ENCODE measurements at regions of chr7 and their contacts with region 1.

Region 1: DNA sequence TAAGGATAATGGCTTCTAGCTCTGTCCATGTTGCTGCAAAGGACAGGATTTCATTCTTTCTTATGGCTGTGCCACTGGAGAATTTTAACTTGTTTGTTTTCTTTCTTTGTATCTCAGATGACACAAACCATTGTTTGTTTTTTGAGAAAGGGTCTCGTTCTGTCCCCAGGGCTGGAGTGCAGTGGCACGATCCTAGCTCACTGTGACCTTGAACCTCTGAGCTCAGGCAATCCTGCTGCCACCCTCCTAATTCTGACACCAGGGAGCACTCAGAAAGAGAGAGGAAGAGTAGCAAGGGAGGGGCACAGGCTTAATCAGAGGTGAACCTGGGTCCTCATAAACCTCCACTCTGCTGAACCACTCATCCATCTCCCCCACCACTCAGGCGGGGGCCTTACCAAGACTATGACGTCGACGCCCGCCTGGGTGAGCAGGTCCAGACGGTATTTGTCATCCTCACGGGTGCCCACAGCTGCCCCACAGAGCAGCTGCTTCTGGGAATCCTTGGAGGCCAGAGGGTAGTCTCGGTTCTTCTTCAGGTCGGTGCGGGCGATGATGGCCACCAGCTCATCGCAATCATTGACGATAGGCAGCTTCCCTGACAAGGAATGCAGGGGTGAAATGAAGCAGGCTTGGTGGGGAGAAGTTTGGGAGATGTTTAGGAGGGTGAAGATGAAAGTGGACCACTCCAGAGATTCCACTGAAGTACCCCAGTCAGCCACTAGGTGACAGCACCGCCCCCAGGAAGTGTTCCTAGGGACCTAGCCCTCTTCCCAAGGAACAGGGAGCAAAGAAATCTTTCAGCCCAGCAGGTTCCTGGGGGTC is 11.6 kb downstream of the IMPDH1 start:
- DNase-seq: peak; percentile 52
- H3K4me3 Mint-ChIP-seq: no peak overlapping the region
- H3K27ac Mint-ChIP-seq: no peak overlapping the region
- H3K4me1 Mint-ChIP-seq: peaks cover under 1% of the 10 kb centered on the region
- H3K27me3 Mint-ChIP-seq: no peaks in the 10 kb centered on the region
- CTCF ChIP-seq: peak; percentile 79

Region 2: GRCh38 chr7:127976056-127976737 is 422.0 kb before region 1 on chr7:
- CTCF ChIA-PET with region 1: no interaction called
- POLR2A ChIA-PET with region 1: no interaction called
- intact Hi-C with region 1: no loop called
- DNase-seq: peak; percentile 38
- H3K4me3 Mint-ChIP-seq: no peak overlapping the region
- H3K27ac Mint-ChIP-seq: peak overlapping the region; percentile 46
- H3K4me1 Mint-ChIP-seq: peaks cover 6% of the 10 kb centered on the region
- H3K27me3 Mint-ChIP-seq: no peaks in the 10 kb centered on the region
- CTCF ChIP-seq: no peak

Region 3: DNA sequence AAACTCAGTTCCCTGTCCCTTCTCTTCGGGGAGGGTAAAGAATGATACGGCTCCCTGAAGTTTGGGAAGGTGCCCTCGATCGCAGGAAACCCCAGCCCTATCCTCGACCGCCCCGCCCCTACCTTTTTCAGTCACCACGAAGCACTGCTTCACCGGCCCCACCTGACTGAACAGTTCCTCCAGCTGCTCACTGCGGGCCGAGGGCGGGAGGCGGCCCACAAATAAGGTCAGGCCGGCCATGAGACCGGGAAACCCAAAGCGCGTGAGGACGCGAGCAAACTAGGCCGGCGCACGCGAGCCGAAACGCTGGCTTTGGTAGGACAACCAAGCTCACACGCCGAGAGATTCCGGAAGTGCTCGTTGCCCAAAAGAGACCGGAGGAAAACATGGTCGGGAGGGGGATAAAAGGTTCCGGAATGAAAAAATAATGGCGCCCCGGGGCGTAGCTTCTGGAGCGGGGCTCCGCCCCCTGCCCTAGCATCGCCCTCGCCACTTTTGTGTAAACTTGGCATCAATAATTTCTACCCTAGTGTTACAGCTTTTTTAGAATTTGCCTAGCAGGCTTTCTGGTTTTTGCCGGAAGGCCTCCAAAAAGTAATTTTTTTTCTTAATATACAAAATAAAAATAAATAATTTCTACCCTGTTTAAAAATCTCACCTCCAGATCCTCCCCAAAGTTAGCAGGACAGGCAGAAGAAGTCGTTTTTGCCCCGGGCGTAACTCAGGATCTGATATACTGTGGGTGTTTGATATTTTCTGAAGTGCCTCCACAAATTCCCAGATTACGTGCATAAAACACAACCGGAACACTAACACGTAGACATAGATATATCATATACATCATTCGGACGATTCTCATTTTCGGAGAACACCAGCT is 54.4 kb before region 1 on chr7 and contains the start of gene RBM28:
- CTCF ChIA-PET with region 1: interaction called, 372 read pairs
- POLR2A ChIA-PET with region 1: no interaction called
- intact Hi-C with region 1: no loop called
- DNase-seq: peak; percentile 95
- H3K4me3 Mint-ChIP-seq: peak within 1 kb of the TSS; percentile 94
- H3K27ac Mint-ChIP-seq: peak within 1 kb of the TSS; percentile 96
- H3K4me1 Mint-ChIP-seq: peaks cover 8% of the 10 kb centered on the region
- H3K27me3 Mint-ChIP-seq: peaks cover 7% of the 10 kb centered on the region
- CTCF ChIP-seq: no peak
- total RNA-seq, gene RBM28: 61.5 and 63.8 TPM in 2 replicates

Region 4: GRCh38 chr7:128366300-128366699 is 31.9 kb before region 1 on chr7:
- CTCF ChIA-PET with region 1: interaction called, 10 read pairs
- POLR2A ChIA-PET with region 1: no interaction called
- intact Hi-C with region 1: no loop called
- DNase-seq: no peak
- H3K4me3 Mint-ChIP-seq: no peak overlapping the region
- H3K27ac Mint-ChIP-seq: no peak overlapping the region
- H3K4me1 Mint-ChIP-seq: peaks cover 6% of the 10 kb centered on the region
- H3K27me3 Mint-ChIP-seq: peaks cover 11% of the 10 kb centered on the region
- CTCF ChIP-seq: no peak

Region 5: GRCh38 chr7:128387216-128388144 is 10.7 kb before region 1 on chr7:
- CTCF ChIA-PET with region 1: interaction called, 67 read pairs
- POLR2A ChIA-PET with region 1: interaction called, 3 read pairs
- intact Hi-C with region 1: no loop called
- DNase-seq: peak; percentile 78
- H3K4me3 Mint-ChIP-seq: no peak overlapping the region
- H3K27ac Mint-ChIP-seq: no peak overlapping the region
- H3K4me1 Mint-ChIP-seq: peaks cover 11% of the 10 kb centered on the region
- H3K27me3 Mint-ChIP-seq: no peaks in the 10 kb centered on the region
- CTCF ChIP-seq: peak; percentile 89

Region 6: GRCh38 chr7:128415217-128415785 is 17.1 kb after region 1 on chr7:
- CTCF ChIA-PET with region 1: interaction called, 20 read pairs
- POLR2A ChIA-PET with region 1: interaction called, 3 read pairs
- intact Hi-C with region 1: no loop called
- DNase-seq: no peak
- H3K4me3 Mint-ChIP-seq: no peak overlapping the region
- H3K27ac Mint-ChIP-seq: no peak overlapping the region
- H3K4me1 Mint-ChIP-seq: no peaks in the 10 kb centered on the region
- H3K27me3 Mint-ChIP-seq: peaks cover 13% of the 10 kb centered on the region
- CTCF ChIP-seq: no peak

Measured in MCF 10A (cell line).